CD8-positive, alpha-beta memory T cell (primary cell): ENCODE measurements at regions of chr11 and their contacts with region 1.

Region 1: DNA sequence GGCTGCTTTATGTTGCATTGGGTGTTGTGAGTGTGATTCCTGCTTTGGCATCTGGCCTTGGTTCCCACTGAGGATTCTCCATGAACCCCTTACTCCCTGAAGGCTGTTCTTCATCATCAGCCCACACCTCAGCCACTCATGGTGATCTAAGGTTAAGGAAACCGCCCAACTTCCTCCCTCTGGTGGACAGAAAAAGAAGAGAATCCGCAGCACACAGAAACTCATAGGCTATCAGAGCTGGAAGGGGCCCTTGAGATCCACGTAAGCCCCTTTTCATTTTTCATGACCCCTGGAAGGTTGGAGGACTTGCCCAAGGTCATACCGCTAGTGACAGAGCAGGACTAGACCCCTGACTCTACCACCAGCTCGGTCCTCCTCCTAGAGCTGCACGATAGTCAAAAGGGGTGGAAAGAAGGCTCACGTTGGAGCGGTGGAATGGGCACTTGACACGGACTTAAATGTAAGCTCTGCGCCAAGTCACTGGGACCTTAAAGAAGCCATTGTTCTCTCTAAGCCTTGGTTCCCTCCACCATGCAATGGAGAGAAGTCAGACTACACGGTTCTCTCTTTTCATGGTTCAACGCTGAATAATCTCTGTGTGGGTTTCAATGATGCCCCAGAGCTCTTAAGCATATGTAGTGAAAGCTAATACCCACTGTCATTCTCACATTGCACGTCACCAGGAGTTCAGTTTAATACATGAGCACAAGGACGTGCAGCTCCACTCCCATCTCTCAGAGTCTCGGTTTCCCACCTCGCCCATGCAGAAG is 83.6 kb upstream of the CRTAM start:
- DNase-seq: peak in 3 of 5 donors; percentile 28 to 54 (median 46)
- H3K4me3 ChIP-seq: no peak overlapping the region
- H3K4me3 Mint-ChIP-seq: no peak overlapping the region
- H3K27ac ChIP-seq: no peak overlapping the region
- H3K27ac Mint-ChIP-seq: peak overlapping the region in 4 of 8 donors; percentile 19 to 66 (median 50)
- H3K4me1 ChIP-seq: peaks cover 38% of the 10 kb centered on the region
- H3K4me1 Mint-ChIP-seq: peaks cover 42 to 60% (median 45%) of the 10 kb centered on the region in 3 donors
- H3K27me3 ChIP-seq: no peaks in the 10 kb centered on the region
- H3K27me3 Mint-ChIP-seq: no peaks in the 10 kb centered on the region

Region 2: GRCh38 chr11:122202951-122203456 is 551.7 kb before region 1 on chr11:
- CTCF ChIA-PET with region 1: no interaction called
- POLR2A ChIA-PET with region 1: no interaction called
- DNase-seq: peak in 1 of 5 donors; percentile 0
- H3K4me3 ChIP-seq: no peak overlapping the region
- H3K4me3 Mint-ChIP-seq: no peak overlapping the region
- H3K27ac ChIP-seq: no peak overlapping the region
- H3K27ac Mint-ChIP-seq: no peak overlapping the region
- H3K4me1 ChIP-seq: no peaks in the 10 kb centered on the region
- H3K4me1 Mint-ChIP-seq: no peaks in the 10 kb centered on the region
- H3K27me3 ChIP-seq: no peaks in the 10 kb centered on the region
- H3K27me3 Mint-ChIP-seq: peaks cover 14 to 28% of the 10 kb centered on the region in 2 donors

Region 3: DNA sequence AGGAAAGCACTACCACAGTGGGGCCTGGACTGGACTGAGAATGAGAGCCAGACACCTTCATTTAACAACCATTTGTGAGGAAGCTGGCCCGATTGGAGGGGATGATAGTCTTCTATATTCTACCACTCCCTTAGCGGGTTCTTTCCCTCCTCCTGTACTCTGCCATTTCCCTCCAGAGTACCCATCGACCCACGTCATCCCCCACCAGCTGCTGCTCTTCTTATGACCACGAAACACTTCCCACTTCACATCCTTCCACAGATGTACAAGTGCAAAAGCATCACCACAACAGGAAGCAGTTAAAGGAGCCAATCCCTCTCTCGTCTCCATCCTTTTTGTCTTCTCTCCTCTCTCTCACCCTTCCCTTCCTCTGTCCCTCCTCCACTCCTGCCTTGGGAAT is 117.2 kb before region 1 on chr11:
- CTCF ChIA-PET with region 1: interaction called, 199 read pairs
- POLR2A ChIA-PET with region 1: no interaction called
- DNase-seq: peak in 2 of 5 donors; percentile 21 to 53
- H3K4me3 ChIP-seq: no peak overlapping the region
- H3K4me3 Mint-ChIP-seq: no peak overlapping the region
- H3K27ac ChIP-seq: no peak overlapping the region
- H3K27ac Mint-ChIP-seq: peak overlapping the region in 2 of 8 donors; percentile 8 to 66
- H3K4me1 ChIP-seq: no peaks in the 10 kb centered on the region
- H3K4me1 Mint-ChIP-seq: peaks cover 5 to 6% (median 6%) of the 10 kb centered on the region in 3 donors
- H3K27me3 ChIP-seq: no peaks in the 10 kb centered on the region
- H3K27me3 Mint-ChIP-seq: peaks cover 0 to 2% of the 10 kb centered on the region in 2 donors

Region 4: DNA sequence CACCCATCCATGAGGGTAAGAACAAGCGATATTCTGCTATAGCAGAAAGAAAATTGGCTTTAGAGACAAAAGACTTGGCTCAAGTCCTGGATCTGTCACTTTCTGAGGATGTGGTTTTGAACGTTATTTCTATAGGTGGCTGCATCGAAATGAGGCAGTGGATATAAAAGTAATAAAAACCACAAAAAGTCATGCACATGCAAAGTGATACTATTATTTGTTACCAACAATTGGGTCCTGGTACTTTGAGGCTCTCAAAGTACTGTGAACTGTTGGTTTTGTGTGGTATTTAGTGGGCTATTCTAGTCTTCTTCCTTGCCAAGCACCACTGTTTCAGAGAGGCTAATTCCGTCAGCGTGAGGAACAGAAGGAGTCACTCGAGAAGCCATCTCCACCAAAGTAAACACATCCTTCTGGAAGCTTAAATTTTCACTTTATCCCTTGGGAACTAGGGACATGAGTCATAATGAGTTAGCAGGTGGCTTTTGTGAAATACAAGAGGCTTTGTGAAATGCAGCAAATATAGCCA is 86.1 kb before region 1 on chr11:
- CTCF ChIA-PET with region 1: interaction called, 23 read pairs
- POLR2A ChIA-PET with region 1: interaction called, 3 read pairs
- DNase-seq: peak in 2 of 5 donors; percentile 41 to 51
- H3K4me3 ChIP-seq: peak overlapping the region; percentile 27
- H3K4me3 Mint-ChIP-seq: peak overlapping the region in 6 of 7 donors; percentile 25 to 78 (median 52)
- H3K27ac ChIP-seq: no peak overlapping the region
- H3K27ac Mint-ChIP-seq: peak overlapping the region; percentile 33 to 94 (median 88)
- H3K4me1 ChIP-seq: peaks cover 63% of the 10 kb centered on the region
- H3K4me1 Mint-ChIP-seq: peaks cover 57 to 81% (median 71%) of the 10 kb centered on the region in 3 donors
- H3K27me3 ChIP-seq: no peaks in the 10 kb centered on the region
- H3K27me3 Mint-ChIP-seq: no peaks in the 10 kb centered on the region

Region 5: DNA sequence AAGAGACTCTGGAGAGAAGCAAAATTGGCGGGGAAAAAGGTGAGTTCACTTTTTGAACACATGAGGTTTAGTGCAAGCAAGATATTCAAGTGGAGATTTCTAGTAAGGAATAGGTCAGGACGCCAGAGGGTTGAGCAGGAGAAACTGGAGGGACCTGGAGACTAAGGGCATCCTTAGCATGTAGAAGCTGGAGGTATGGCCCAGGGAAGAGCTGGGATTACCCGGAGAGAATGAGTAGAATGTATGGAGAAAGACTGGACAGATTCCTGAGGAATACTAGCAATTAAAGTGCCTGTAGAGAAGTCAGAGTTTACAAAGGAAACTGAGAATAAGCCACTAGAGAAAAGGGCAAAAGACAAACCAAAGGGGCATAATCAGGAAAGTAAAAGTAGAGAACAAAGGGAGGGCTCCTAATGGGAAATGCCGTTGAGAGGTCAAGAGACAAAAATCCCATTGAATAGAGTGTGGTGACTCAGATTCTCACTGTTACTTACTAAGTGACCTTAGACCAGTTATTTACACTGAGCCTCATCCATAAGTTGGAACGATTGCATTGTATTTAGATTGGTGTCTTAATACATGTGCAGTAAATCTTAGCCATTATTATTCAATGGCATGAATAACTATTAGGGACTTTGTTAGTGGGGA is 16.9 kb before region 1 on chr11:
- CTCF ChIA-PET with region 1: interaction called, 59 read pairs
- POLR2A ChIA-PET with region 1: interaction called, 7 read pairs
- DNase-seq: no peak
- H3K4me3 ChIP-seq: no peak overlapping the region
- H3K4me3 Mint-ChIP-seq: no peak overlapping the region
- H3K27ac ChIP-seq: no peak overlapping the region
- H3K27ac Mint-ChIP-seq: no peak overlapping the region
- H3K4me1 ChIP-seq: peaks cover 43% of the 10 kb centered on the region
- H3K4me1 Mint-ChIP-seq: peaks cover 18 to 21% (median 20%) of the 10 kb centered on the region in 3 donors
- H3K27me3 ChIP-seq: no peaks in the 10 kb centered on the region
- H3K27me3 Mint-ChIP-seq: no peaks in the 10 kb centered on the region

Region 6: DNA sequence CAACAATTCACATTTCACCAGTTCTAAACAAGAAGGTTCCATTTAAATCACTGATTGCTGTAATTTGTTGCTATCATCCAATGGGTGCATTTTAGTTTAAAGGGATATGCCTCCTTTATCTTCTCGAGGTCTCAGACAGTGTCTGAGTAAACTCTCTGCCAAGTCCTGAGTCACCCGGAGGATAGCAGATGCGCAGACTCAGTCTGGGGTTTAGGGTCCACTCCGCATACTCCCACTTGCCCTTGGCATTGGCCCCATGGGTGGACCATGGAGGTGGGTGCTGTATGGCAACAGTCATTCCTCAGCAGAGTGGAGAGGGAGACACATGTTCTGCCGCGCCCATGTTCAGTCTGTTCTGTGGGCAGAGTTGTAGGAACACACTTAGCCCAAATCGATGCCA is 18.2 kb after region 1 on chr11:
- CTCF ChIA-PET with region 1: interaction called, 19 read pairs
- POLR2A ChIA-PET with region 1: no interaction called
- DNase-seq: no peak
- H3K4me3 ChIP-seq: no peak overlapping the region
- H3K4me3 Mint-ChIP-seq: no peak overlapping the region
- H3K27ac ChIP-seq: no peak overlapping the region
- H3K27ac Mint-ChIP-seq: no peak overlapping the region
- H3K4me1 ChIP-seq: no peaks in the 10 kb centered on the region
- H3K4me1 Mint-ChIP-seq: peaks cover 5 to 20% (median 12%) of the 10 kb centered on the region in 3 donors
- H3K27me3 ChIP-seq: no peaks in the 10 kb centered on the region
- H3K27me3 Mint-ChIP-seq: peaks cover 0 to 2% of the 10 kb centered on the region in 2 donors